ENCODE measurements at regions of chr14 and their contacts with region 1.

Region 1: DNA sequence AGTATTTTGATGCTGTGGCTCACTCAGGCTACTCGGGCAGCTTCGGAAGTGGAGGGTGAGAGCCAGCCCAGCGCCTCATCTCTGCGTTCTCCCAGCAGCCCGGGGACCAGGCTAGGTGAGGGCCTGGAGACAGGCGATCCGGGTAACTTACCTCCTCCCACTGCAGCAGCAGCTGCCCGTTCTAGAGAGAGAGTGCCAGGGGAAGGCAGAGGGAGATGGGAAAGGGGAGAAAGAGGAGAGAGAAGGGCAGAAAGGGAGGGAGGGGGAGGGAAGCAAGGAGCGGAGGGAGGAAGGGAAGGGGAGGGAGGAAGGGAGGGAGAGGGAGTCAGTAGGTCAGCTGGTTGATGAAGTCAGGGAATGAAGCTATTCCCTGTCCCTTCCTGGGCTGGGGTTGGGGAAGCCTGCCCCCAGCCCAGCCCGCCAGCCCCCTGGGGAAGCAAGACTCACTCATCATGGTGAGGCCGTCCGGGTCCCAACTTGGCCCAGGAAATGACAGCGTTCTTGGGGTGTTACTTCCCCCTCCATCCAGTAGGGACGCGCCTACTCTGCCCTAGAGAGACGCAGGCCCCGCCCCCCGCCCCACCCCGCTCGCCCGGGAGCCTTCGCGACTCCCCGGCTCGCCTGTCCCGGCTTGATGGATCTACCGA is at the start of gene IFI27L2:
- DNase-seq: peak; percentile 80
- ATAC-seq: peak; percentile 98
- H3K4me3 ChIP-seq: peak within 1 kb of the TSS; percentile 57 to 85 (median 65)
- H3K4me3 Mint-ChIP-seq: peak within 1 kb of the TSS; percentile 94
- H3K27ac ChIP-seq: peak within 1 kb of the TSS; percentile 35 to 44
- H3K27ac Mint-ChIP-seq: peak within 1 kb of the TSS; percentile 68
- H3K4me1 ChIP-seq: peaks cover 12 to 18% of the 10 kb centered on the region in 2 donors
- H3K4me1 Mint-ChIP-seq: peaks cover 14% of the 10 kb centered on the region
- H3K27me3 ChIP-seq: peaks cover 0 to 4% (median 0%) of the 10 kb centered on the region in 4 experiments
- H3K27me3 Mint-ChIP-seq: peaks cover 10% of the 10 kb centered on the region
- CTCF ChIP-seq: peak; percentile 45
- total RNA-seq, gene IFI27L2: 30.2 and 31.4 TPM in 2 replicates

Region 2: DNA sequence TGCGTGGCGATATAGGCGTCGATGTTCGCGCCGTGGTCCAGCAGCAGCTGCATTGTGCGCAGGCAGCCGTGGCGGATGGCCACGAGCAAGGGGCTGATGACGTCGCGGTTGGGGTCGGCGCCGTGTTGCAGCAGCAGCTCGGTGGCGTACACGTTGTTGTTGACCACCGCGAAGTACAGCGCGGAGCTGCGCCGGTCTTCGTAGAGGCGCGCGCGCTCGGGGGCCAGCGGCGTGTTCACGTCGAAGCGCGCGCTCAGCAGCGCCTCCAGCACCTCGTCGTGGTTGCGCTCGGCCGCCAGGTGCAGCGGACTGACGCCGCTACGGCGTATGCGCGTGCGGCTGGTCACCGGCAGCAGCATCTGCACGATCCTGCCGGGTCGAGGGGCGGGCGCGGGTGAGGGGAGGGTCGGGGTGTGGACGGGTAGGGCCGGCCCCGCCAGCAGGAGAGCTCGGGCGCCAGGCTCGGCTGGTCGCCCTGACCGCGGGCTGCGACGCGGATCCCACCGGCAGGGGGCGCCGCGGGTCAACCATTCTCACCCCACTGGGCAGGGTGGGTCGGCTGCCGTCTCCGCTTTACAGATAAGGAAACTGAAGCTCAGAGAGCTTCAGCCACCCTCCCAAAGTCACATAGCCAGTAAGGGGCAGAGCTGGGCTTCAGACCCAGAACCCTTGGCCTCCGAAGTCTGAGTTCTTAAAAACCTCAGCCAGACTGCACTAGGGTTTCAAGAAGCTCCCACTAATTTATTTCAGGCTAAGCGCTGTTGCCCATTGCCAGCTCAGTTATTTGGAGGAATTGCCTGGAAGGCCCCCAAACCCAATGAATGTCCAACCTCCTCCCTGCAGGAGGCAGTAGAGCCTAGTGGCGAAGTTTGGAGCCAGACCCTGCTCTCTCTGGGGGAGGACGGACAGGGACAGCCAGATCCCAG is 189.7 kb before region 1 on chr14:
- CTCF ChIA-PET with region 1: interaction called, 21 read pairs
- POLR2A ChIA-PET with region 1: no interaction called
- intact Hi-C with region 1: no loop called
- DNase-seq: peak; percentile 93
- ATAC-seq: peak; percentile 95
- H3K4me3 ChIP-seq: peak overlapping the region in 4 of 5 experiments; percentile 28 to 50 (median 47)
- H3K4me3 Mint-ChIP-seq: peak overlapping the region; percentile 78
- H3K27ac ChIP-seq: no peak overlapping the region
- H3K27ac Mint-ChIP-seq: no peak overlapping the region
- H3K4me1 ChIP-seq: peaks cover 5 to 11% of the 10 kb centered on the region in 2 donors
- H3K4me1 Mint-ChIP-seq: peaks cover 14% of the 10 kb centered on the region
- H3K27me3 ChIP-seq: peaks cover 0 to 11% (median 2%) of the 10 kb centered on the region in 4 experiments
- H3K27me3 Mint-ChIP-seq: peaks cover 10% of the 10 kb centered on the region
- CTCF ChIP-seq: peak; percentile 99

Region 3: DNA sequence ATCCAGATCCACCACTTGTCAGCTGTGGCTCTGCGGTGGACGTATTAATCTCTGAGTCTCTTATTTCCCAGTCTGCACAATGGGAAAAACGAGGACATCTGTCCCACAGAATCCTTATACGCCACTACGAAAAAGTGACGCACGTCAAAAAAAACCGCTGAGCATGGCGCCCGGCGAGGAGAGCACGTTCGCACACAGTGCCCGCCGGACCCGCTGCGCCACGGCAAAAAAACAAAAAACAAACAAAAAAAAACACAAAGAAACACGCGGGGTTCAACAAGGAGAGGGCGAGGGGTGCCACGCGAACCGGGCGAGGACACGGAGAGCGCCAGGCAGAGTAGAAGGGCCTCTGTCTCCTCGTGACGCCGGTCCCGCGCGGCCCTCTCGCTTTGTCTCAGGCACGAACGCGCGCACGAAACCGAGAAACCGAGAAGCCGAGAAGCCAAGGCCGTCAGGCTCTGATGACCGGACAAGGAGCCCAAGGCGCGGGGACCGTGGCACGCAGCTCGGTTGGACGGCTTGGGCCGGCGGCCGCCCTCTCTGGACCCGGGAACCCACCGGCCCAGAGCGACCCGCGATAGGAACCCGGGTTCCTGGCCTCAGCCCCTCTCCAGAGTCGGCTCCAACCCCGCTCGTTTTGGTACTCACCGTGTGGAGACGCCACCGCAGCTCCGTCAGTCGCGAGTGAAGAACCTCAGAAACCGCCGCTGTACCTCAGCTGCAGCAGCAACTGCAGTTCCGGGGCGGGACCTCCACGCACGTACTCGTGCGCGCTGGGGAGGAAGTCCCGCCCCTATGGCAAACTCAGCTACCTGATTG is 48.6 kb before region 1 on chr14 and contains the start of gene DDX24:
- CTCF ChIA-PET with region 1: interaction called, 10 read pairs
- POLR2A ChIA-PET with region 1: no interaction called
- intact Hi-C with region 1: loop called (anchors 1 kb)
- DNase-seq: peak; percentile 97
- ATAC-seq: peak; percentile 97
- H3K4me3 ChIP-seq: peak within 1 kb of the TSS; percentile 91 to 99 (median 97)
- H3K4me3 Mint-ChIP-seq: peak within 1 kb of the TSS; percentile 97
- H3K27ac ChIP-seq: peak within 1 kb of the TSS; percentile 83 to 93
- H3K27ac Mint-ChIP-seq: peak within 1 kb of the TSS; percentile 97
- H3K4me1 ChIP-seq: peaks cover 36 to 45% of the 10 kb centered on the region in 2 donors
- H3K4me1 Mint-ChIP-seq: peaks cover 46% of the 10 kb centered on the region
- H3K27me3 ChIP-seq: no peaks in the 10 kb centered on the region
- H3K27me3 Mint-ChIP-seq: no peaks in the 10 kb centered on the region
- CTCF ChIP-seq: no peak
- total RNA-seq, gene DDX24: 191 and 211 TPM in 2 replicates

Region 4: DNA sequence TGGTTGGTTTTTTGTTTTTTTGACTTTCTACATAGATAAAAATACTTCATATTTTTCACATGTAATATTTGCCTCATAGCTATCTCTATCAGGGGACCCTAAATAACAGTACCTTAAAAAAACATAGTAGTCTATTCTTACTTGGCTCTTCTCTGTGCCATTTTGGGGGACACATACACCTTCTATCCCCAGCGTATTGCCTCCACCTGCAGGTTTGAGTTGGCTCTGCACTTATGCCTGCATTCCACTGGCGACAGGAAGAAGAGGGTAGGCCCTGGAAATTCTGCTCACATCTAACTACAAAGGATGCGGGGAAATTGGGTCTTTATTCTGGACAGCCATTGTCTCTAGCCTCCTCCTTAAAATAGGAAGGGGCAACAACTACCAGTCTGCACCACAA is 14.0 kb after region 1 on chr14:
- CTCF ChIA-PET with region 1: interaction called, 17 read pairs
- POLR2A ChIA-PET with region 1: no interaction called
- intact Hi-C with region 1: no loop called
- DNase-seq: no peak
- ATAC-seq: no peak
- H3K4me3 ChIP-seq: no peak overlapping the region
- H3K4me3 Mint-ChIP-seq: no peak overlapping the region
- H3K27ac ChIP-seq: no peak overlapping the region
- H3K27ac Mint-ChIP-seq: no peak overlapping the region
- H3K4me1 ChIP-seq: no peaks in the 10 kb centered on the region
- H3K4me1 Mint-ChIP-seq: peaks cover 4% of the 10 kb centered on the region
- H3K27me3 ChIP-seq: no peaks in the 10 kb centered on the region
- H3K27me3 Mint-ChIP-seq: peaks cover 5% of the 10 kb centered on the region
- CTCF ChIP-seq: no peak

Region 5: DNA sequence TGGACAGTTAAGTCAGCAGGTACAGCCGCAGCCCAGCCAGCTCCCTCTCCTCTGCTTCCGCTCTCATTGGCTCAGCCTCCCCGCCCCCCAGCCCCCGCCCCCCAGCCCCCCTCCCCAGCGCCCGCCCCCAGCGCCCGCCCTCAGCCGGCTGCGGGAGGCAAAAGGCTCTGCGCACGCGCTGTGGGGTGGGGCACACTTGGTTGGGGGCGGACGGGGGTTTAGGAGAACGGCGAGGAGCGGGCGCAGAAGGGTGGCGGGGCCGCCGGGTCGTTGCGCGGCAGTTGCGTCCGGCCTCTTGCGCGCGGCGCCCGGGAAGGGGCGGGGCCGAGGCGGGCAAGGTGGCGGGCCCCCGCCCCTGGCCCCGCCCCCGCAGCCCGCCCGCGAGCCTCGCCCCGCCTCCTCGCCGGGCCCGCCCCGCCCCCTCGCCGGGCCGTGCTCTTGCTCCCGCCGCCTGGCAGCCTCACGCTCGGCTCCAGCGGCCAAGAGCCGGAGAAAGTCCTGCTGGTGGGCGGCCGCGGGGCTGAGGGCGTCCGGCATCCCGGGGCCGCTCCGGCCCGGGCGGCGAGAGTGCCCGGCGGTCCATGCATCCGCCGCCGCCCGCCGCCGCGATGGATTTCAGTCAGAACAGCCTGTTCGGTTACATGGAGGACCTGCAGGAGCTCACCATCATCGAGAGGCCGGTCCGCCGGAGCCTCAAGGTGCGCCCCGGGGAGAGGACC is 44.8 kb after region 1 on chr14 and contains the start of gene PPP4R4:
- CTCF ChIA-PET with region 1: interaction called, 39 read pairs
- POLR2A ChIA-PET with region 1: interaction called, 8 read pairs
- intact Hi-C with region 1: loop called (anchors 1 kb)
- DNase-seq: peak; percentile 82
- ATAC-seq: peak; percentile 92
- H3K4me3 ChIP-seq: peak within 1 kb of the TSS in 4 of 5 experiments; percentile 46 to 66 (median 61)
- H3K4me3 Mint-ChIP-seq: peak within 1 kb of the TSS; percentile 88
- H3K27ac ChIP-seq: no peak within 1 kb of the TSS
- H3K27ac Mint-ChIP-seq: peak within 1 kb of the TSS; percentile 50
- H3K4me1 ChIP-seq: peaks cover 17 to 19% of the 10 kb centered on the region in 2 donors
- H3K4me1 Mint-ChIP-seq: peaks cover 15% of the 10 kb centered on the region
- H3K27me3 ChIP-seq: peaks cover 0 to 49% (median 35%) of the 10 kb centered on the region in 4 experiments
- H3K27me3 Mint-ChIP-seq: peaks cover 50% of the 10 kb centered on the region
- CTCF ChIP-seq: no peak
- total RNA-seq, gene PPP4R4: not detected in 2 replicates

Region 6: GRCh38 chr14:94203473-94204210 is 74.4 kb after region 1 on chr14:
- CTCF ChIA-PET with region 1: no interaction called
- POLR2A ChIA-PET with region 1: no interaction called
- intact Hi-C with region 1: no loop called
- DNase-seq: no peak
- ATAC-seq: no peak
- H3K4me3 ChIP-seq: no peak overlapping the region
- H3K4me3 Mint-ChIP-seq: no peak overlapping the region
- H3K27ac ChIP-seq: no peak overlapping the region
- H3K27ac Mint-ChIP-seq: no peak overlapping the region
- H3K4me1 ChIP-seq: no peaks in the 10 kb centered on the region
- H3K4me1 Mint-ChIP-seq: no peaks in the 10 kb centered on the region
- H3K27me3 ChIP-seq: peaks cover 0 to 13% (median 0%) of the 10 kb centered on the region in 4 experiments
- H3K27me3 Mint-ChIP-seq: peaks cover 45% of the 10 kb centered on the region
- CTCF ChIP-seq: no peak

Region 7: GRCh38 chr14:94548999-94549985 is 420.1 kb after region 1 on chr14:
- CTCF ChIA-PET with region 1: no interaction called
- POLR2A ChIA-PET with region 1: no interaction called
- intact Hi-C with region 1: loop called (anchors 5 kb)
- DNase-seq: peak; percentile 45
- ATAC-seq: peak; percentile 31
- H3K4me3 ChIP-seq: no peak overlapping the region
- H3K4me3 Mint-ChIP-seq: no peak overlapping the region
- H3K27ac ChIP-seq: no peak overlapping the region
- H3K27ac Mint-ChIP-seq: no peak overlapping the region
- H3K4me1 ChIP-seq: no peaks in the 10 kb centered on the region
- H3K4me1 Mint-ChIP-seq: no peaks in the 10 kb centered on the region
- H3K27me3 ChIP-seq: peaks cover 0 to 13% (median 0%) of the 10 kb centered on the region in 4 experiments
- H3K27me3 Mint-ChIP-seq: peaks cover 31% of the 10 kb centered on the region
- CTCF ChIP-seq: peak; percentile 76